Sigmoid colon (tissue), 7 donors: ENCODE measurements at regions of chr16 and their contacts with region 1.

Region 1: DNA sequence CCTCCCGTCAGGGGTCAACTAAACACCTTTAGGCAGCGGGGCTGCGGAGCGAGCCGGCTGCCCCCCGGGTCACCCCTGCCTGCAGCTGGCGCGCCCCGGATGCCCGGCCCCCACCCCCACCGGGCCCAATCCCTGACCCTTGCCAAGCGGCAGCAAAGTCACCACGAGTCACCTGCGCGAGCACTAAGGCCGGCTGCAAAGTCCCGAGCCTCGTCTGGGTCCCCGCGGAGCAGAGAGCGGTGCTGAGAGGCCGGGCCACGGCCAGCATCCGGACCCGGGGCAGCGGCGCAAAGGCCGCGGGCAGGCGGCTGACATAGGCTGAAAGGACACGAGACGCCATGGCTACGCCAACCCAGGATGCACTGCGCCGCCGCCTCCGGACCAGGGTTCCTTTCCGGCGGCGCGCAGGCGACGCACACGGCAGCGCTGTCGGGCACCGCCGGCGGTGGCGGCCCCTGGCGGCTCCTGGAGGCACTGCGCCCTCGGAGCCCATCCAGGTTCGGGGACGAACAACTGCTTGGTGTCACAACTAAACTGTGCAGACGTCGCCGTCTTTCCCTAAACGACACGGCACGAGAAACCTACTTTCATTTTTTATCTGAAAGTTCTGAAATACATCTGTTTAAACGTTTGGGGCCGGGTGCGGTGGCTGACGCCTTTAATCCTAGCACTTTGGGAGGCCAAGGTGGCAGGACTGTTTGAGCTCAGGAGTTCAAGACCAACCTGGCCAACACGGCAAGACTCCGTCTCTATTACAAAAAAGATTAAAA is at the start of gene NDUFAB1:
- DNase-seq: peak; percentile 92
- H3K4me3 ChIP-seq: peak within 1 kb of the TSS; percentile 65 to 96 (median 90)
- H3K27ac ChIP-seq: peak within 1 kb of the TSS; percentile 82 to 87 (median 85)
- H3K4me1 ChIP-seq: peaks cover 0 to 31% (median 16%) of the 10 kb centered on the region in 4 donors
- H3K27me3 ChIP-seq: no peaks in the 10 kb centered on the region
- CTCF ChIP-seq: peak; percentile 85 to 99 (median 92)
- EP300 ChIP-seq: no peak
- POLR2A ChIP-seq: no peak
- total RNA-seq, gene NDUFAB1: 101 to 179 (median 159) TPM

Region 2: DNA sequence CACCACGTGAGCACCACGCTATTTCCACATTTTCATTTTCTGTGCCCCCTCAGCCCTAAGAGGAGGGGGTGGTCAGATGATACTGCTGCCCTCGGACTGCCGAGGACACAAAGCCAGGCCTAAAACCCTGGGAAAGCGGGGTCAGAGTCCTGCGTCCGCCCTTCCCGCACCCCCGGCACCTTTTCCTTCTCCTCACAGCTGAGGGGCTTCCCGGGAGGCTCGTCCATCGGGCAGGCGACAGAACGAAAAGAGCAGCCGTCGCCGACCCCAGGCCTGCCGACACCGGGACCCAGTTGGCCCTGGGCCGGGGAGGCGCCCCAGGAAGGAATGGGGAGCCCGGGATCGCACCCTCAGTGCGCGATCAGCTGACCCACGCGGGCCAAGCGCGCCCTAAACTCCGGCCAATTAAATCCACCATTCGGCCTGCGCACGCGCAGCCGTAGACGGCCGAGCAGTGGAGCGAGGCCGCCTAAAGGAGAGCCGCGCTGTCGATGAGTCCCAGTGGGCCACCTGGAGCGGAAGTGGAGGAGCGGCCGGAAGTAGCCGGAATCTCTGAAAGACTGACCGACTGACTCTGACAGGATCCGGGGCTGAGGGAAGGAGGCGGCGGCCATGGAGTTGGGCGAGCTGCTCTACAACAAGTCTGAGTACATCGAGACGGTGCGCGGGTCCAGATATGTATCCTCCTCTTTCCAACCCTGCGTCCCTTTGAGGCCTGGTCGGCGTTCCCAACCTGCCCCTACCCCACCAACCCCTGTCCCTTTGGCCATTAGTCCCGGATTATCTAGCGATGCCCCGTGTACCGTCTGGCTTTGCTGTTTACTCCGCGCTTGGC is 45.0 kb after region 1 on chr16 and contains the starts of genes DCTN5 and PALB2:
- intact Hi-C with region 1: loop called (anchors 2 kb)
- DNase-seq: peak; percentile 96
- H3K4me3 ChIP-seq: peak within 1 kb of the TSS; percentile 70 to 87 (median 76)
- H3K27ac ChIP-seq: peak within 1 kb of the TSS; percentile 78 to 82 (median 80)
- H3K4me1 ChIP-seq: peaks cover 0 to 28% (median 24%) of the 10 kb centered on the region in 4 donors
- H3K27me3 ChIP-seq: no peaks in the 10 kb centered on the region
- CTCF ChIP-seq: no peak
- EP300 ChIP-seq: no peak
- POLR2A ChIP-seq: no peak
- total RNA-seq, gene DCTN5: 24.1 to 41.4 (median 34.1) TPM
- total RNA-seq, gene PALB2: 7.5 to 11.2 (median 9.4) TPM

Region 3: DNA sequence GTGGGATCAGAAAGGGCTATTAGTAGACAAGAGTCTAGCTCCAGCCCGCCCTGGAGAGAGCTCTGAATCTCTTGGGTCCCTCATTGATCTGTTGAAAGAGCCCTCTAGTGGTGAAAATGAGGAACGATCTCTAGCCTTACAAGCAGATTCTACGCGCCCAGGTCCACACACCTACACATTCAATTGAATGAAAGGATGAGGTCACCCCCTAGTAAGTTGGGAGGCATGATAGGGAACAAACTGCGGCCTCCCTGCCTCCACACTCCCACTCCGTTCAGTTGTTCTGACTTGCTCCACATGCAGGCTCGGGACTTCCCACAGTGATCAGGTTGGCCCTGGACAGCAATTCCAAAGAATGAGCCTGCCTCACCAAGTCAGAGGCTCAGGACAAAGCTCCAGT is 657.1 kb after region 1 on chr16:
- intact Hi-C with region 1: no loop called
- DNase-seq: no peak
- H3K4me3 ChIP-seq: no peak overlapping the region
- H3K27ac ChIP-seq: no peak overlapping the region
- H3K4me1 ChIP-seq: peaks cover 0 to 5% (median 0%) of the 10 kb centered on the region in 4 donors
- H3K27me3 ChIP-seq: peaks cover 5 to 52% (median 33%) of the 10 kb centered on the region in 3 donors
- CTCF ChIP-seq: peak in 3 of 4 experiments; percentile 31 to 64 (median 39)
- EP300 ChIP-seq: no peak
- POLR2A ChIP-seq: no peak